ENCODE measurements at regions of chr3 and their contacts with region 1.

Region 1: GRCh38 chr3:187745201-187746058 is at the start of gene BCL6:
- DNase-seq: peak; percentile 97

Region 2: DNA sequence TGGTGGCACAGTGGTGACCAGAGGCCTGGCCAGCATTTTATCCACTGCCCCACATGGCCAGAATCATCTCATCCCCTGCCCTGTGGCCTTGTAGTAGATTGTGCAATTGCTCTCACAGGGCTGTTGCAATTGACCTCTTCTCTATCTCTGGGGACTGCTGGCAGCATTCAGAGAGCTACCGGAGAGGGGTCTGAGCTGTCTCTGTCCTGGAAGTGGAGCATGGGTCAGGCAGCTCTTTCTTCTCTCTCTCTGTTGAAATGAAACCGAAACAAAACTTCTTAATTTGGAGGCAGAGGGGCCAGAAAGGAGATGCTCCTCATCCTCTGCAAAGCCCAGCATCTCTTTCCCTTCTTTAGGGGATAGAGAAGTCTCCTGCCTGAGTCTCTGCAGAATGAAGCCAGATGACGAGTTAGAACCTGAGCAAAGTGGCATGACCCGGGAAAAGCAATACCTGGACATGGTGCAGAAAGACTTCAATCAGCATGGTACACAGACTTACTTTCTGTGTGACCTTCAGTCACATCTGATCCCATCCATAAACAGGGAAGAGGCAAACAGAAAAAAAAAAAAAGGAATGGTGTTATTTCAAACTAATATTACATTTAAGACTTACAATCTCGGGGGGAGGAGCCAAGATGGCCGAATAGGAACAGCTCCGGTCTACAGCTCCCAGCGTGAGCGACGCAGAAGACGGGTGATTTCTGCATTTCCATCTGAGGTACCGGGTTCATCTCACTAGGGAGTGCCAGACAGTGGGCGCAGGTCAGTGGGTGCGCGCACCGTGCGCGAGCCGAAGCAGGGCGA is 144.4 kb after region 1 on chr3:
- in situ Hi-C with region 1: no loop called
- DNase-seq: no peak

Region 3: DNA sequence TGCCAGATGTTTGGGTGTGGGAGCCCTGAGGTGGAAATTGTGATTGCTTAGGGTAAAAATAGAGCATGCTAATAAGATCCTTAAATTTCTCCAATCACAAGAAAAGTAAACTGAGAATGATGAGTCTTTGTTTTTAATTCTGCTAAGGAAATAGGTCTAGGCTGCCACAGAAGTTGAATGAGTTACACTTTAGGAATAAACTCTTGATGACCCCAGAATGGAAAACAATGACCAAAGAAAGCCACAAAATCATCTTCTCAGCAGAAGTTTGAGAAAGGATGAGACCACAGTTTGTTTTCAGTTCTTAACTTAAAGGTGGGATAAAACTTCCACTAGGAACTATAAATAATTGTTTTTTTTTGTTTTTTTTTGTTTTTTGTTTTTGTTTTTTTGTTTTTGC is 164.4 kb after region 1 on chr3:
- in situ Hi-C with region 1: no loop called
- DNase-seq: no peak

Region 4: GRCh38 chr3:189148081-189148507 is 1402.7 kb after region 1 on chr3:
- in situ Hi-C with region 1: loop called (anchors 25 kb)
- DNase-seq: peak; percentile 71

Measured in KBM-7 (cell line).